ENCODE measurements at regions of chr11 and their contacts with region 1.

Region 1: GRCh38 chr11:2089536-2090165 is 49.5 kb downstream of the IGF2 start:
- DNase-seq: peak; percentile 73
- ATAC-seq: peak; percentile 100
- H3K4me3 ChIP-seq: no peak overlapping the region
- H3K27ac ChIP-seq: no peak overlapping the region
- H3K4me1 ChIP-seq: peaks cover 4 to 19% of the 10 kb centered on the region in 2 experiments; a peak in 2 of 4 replicates
- H3K27me3 ChIP-seq: no peaks in the 10 kb centered on the region
- CTCF ChIP-seq: no peak
- POLR2A ChIP-seq: no peak
- RAD21 ChIP-seq: no peak

Region 2: DNA sequence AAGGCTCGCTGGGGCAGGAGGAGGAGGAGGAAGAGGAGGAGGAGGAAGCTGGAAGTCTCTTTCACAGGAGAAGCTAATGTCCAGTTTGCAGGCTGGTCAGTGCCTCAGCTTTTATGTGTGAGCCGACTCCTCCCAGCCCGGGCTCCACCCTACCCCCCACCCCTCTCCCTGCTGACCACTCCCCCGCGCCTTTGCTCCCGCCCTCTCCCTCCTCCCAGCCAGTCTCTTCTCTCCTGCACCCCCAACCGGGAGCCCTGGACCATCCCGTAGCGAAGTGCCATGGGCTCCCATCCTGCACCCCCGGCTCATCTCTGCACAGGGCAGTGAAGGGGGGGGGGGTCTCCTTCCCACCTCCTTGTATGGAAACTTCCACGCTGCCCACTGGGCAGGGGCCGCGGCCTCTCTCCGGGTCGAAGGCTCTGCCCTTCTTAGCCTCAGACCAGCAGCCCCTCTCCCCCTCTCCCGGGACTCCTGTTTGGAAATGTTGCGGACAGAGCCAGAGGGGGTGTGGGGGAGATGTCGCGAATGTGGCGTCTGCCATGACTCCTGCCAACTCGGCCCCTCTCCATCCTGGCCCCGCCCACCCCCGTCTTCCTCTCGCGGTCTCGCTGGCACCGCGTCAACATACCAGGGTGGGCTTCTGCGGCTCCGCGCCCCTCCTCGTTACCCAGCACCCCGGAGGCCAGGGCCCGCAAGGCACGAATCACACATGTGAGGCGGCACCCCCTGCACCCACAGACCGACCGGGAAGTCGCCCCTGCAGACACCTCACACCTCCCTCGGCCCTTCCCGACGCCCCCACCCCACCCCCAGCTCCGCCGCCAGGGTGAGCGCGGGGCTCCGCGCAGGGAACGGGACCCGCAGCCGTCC is 47.8 kb after region 1 on chr11:
- CTCF ChIA-PET with region 1: no interaction called
- POLR2A ChIA-PET with region 1: no interaction called
- RAD21 ChIA-PET with region 1: no interaction called
- intact Hi-C with region 1: loop called (anchors 5 kb)
- DNase-seq: peak; percentile 36
- ATAC-seq: peak; percentile 83
- H3K4me3 ChIP-seq: peak overlapping the region; percentile 48 to 60
- H3K27ac ChIP-seq: peak overlapping the region; percentile 18; the same call in 1 of the 2 replicates
- H3K4me1 ChIP-seq: peaks cover 0 to 17% of the 10 kb centered on the region in 2 experiments; a peak in 2 of 4 replicates
- H3K27me3 ChIP-seq: no peaks in the 10 kb centered on the region
- CTCF ChIP-seq: no peak
- POLR2A ChIP-seq: no peak
- RAD21 ChIP-seq: no peak